Heart right ventricle (tissue), 16 donors: ENCODE measurements at regions of chr1 and their contacts with region 1.

Region 1: DNA sequence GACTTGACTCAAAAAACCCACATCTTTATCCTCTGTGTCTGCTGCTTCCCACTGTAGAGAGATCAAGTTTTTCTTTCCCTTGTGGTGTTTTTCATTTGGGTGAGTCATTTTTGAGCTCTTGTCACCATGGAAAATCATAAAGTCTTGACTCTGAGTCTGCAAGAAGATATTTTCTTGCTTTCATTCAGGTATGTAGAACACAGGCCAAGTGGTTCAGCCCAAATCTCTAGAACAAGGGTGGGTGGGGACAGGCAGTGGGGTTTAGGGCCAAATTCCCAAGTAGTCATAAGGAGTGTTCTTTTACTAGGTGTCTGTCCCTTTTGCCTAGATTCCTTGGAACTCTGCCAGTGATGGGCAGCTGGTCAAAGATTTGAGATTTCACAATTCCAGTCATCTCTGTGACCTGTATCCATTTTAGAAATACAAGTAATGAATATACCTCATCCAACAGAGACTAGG is 21.5 kb upstream of the ARHGAP29 start:
- DNase-seq: no peak
- ATAC-seq: peak in 6 of 8 donors; percentile 28 to 88 (median 57)
- H3K4me3 ChIP-seq: no peak overlapping the region
- H3K27ac ChIP-seq: peak overlapping the region in 5 of 10 donors; percentile 23 to 56 (median 48)
- H3K4me1 ChIP-seq: peaks cover 0 to 29% (median 14%) of the 10 kb centered on the region in 9 donors
- H3K27me3 ChIP-seq: no peaks in the 10 kb centered on the region
- CTCF ChIP-seq: no peak

Region 2: GRCh38 chr1:93980320-93981273 is 278.3 kb before region 1 on chr1:
- intact Hi-C with region 1: no loop called
- DNase-seq: no peak
- ATAC-seq: peak in 5 of 8 donors; percentile 22 to 56 (median 46)
- H3K4me3 ChIP-seq: no peak overlapping the region
- H3K27ac ChIP-seq: peak overlapping the region in 7 of 10 donors; percentile 21 to 77 (median 71)
- H3K4me1 ChIP-seq: peaks cover 0 to 23% (median 11%) of the 10 kb centered on the region in 9 donors
- H3K27me3 ChIP-seq: no peaks in the 10 kb centered on the region
- CTCF ChIP-seq: peak in 5 of 9 donors; percentile 9 to 29 (median 23)

Region 3: GRCh38 chr1:94316836-94317789 is 58.2 kb after region 1 on chr1:
- intact Hi-C with region 1: loop called in 1 of 10 experiments (anchors 10 kb)
- DNase-seq: no peak
- ATAC-seq: no peak
- H3K4me3 ChIP-seq: no peak overlapping the region
- H3K27ac ChIP-seq: peak overlapping the region in 4 of 10 donors; percentile 10 to 58 (median 38)
- H3K4me1 ChIP-seq: peaks cover 7 to 47% (median 18%) of the 10 kb centered on the region in 9 donors
- H3K27me3 ChIP-seq: no peaks in the 10 kb centered on the region
- CTCF ChIP-seq: no peak